Dendritic cell treated with granulocyte-macrophage colony-stimulating factor and Interleukin-4, amounts not matched to agents 40 ng/mL and 50 ng/mL, for 4 days (primary cell): ENCODE measurements at regions of chr17 and their contacts with region 1.

Region 1: GRCh38 chr17:63946440-63947367 is 14.6 kb upstream of the CD79B start:
- H3K4me3 Mint-ChIP-seq: peak overlapping the region; percentile 25
- H3K27ac Mint-ChIP-seq: no peak overlapping the region
- H3K4me1 Mint-ChIP-seq: peaks cover 11% of the 10 kb centered on the region
- H3K27me3 Mint-ChIP-seq: peaks cover 12% of the 10 kb centered on the region

Region 2: DNA sequence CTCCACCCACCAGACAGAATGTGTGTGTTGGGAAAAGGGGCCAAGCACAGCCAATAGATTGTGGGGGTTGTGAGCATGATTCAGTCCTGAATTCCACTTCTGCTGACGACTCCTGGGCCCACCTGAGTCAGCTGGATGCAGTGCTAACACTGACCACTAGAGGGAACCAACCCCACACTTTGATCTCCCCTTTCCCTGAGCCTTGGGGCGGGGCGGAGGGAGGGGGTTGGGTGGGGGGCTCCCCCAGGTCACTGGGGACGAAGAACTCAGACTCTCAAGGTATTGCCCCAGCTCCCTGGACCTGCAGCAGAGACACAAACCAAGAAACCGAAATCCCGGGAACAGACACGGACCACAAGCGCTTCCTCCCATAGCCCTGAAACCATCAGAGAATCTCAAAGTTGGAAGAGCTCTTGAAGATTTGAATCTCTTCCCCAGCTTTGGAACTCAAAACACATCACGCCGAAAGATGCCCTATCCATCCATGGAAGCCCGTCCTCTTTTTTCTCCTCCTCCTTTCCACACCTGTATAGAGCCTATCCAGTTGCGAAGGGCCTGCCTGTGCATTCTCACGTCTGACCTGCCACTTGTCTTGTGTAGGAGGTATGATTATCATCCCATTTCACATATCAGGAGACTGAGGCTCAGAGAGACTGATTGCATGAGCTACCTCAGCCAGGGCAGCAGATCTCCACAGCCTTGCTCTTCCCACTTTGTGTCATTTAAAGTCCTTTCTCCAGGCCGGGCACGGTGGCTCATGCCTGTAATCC is 34.9 kb before region 1 on chr17:
- intact Hi-C with region 1: loop called (anchors 2 kb)
- H3K4me3 Mint-ChIP-seq: no peak overlapping the region
- H3K27ac Mint-ChIP-seq: no peak overlapping the region
- H3K4me1 Mint-ChIP-seq: peaks cover 14% of the 10 kb centered on the region
- H3K27me3 Mint-ChIP-seq: peaks cover 13% of the 10 kb centered on the region

Region 3: DNA sequence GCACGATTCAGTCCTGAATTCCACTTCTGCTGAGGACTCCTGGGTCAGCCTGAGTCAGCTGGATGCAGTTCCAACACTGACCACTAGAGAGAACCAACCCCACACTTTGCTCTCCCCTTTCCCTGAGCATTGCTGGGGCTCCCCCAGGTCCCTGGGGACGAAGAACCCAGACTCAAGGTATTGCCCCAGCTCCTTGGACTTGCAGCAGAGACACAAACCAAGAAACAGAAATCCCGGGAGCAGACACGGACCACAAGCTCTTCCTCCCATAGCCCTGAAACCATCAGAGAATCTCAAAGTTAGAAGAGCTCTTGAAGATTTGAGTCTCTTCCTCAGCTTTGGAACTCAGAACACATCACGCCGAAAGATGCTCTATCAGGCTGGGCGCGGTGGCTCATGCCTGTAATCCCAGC is 27.4 kb before region 1 on chr17:
- intact Hi-C with region 1: loop called (anchors 1 kb)
- H3K4me3 Mint-ChIP-seq: no peak overlapping the region
- H3K27ac Mint-ChIP-seq: no peak overlapping the region
- H3K4me1 Mint-ChIP-seq: peaks cover 35% of the 10 kb centered on the region
- H3K27me3 Mint-ChIP-seq: peaks cover 18% of the 10 kb centered on the region